Mammary epithelial cell (primary cell): ENCODE measurements at regions of chr1 and their contacts with region 1.

Region 1: DNA sequence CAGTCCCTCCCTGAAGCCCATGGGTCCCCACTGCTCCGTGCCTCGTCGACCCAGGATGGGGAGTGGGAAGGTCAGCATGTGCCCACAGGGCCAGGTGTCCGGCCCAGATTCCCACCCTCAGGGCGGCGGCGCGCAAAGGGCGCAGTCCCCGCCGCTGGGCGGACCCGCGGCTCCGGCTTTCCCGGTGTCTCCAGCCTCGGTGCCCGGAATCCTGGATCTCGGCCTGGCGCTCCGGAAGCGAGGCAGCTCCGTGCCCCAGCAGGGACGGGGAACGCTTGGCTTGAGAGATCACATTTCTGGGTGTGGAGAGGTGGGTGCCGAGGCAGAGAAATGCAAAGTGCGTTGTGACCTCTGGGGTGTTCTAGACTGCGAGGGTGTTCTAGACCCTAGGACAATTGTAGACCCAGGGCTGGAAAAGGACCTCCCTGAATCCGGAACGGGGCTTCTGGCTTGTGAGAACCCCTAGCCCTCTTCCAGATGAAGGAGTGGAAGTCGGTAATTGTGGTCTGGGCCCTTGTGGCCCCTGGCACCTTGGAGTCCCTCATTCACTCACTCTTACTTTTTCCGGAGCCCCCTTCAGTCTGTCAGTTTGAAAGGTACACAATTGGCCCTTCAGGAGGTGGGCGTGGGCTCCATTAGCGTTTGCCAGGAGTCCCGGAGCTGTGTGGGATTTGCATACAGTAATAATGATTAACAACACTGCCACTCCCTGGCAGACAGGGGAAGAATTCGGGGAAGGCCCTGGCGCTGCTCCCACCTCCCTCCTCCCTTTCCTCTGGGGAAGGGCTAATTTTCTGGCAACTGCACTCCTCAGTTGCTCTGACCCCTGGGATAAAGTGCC is 1.6 kb upstream of the KCND3 start:
- DNase-seq: peak; percentile 57
- H3K4me3 ChIP-seq: peak overlapping the region; percentile 32 to 52 (median 48)
- H3K27ac ChIP-seq: no peak overlapping the region
- H3K4me1 ChIP-seq: peaks cover 18% of the 10 kb centered on the region
- H3K27me3 ChIP-seq: peaks cover 5% of the 10 kb centered on the region
- CTCF ChIP-seq: peak; percentile 43 to 60

Region 2: DNA sequence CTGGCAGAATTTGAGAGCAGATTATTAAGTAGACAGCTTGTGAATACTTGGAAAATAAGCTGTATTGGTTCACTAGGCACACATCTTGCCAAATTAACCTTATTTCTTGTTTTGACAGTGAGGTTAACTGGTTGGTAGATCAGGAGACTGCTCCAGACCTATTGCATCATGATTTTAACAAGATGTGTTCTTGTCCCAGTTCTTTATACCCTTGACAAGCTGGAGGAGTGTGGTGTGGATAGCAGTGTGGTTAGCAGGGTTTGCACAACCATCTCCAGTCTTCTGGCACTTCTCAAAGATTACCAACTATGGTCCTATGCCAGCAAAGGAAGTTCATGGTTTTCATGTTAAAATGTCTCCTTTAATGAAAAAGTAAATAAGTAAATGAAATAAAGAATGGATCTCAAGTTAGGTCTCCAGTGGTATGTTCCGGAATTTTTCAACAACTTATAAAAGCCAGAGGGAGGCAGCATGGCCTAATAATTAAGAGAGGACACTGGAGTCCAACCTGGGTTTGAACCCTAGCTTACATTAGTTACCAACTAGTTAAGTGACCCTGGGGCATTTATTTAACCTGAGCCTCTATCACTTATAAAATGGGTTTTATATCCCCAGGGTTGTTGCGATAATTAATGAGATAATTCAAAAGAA is 201.3 kb before region 1 on chr1:
- CTCF ChIA-PET with region 1: no interaction called
- dilution Hi-C with region 1: no loop called
- in situ Hi-C with region 1: no loop called
- intact Hi-C with region 1: loop called (anchors 1 kb)
- DNase-seq: no peak
- H3K4me3 ChIP-seq: no peak overlapping the region
- H3K27ac ChIP-seq: no peak overlapping the region
- H3K4me1 ChIP-seq: no peaks in the 10 kb centered on the region
- H3K27me3 ChIP-seq: no peaks in the 10 kb centered on the region
- CTCF ChIP-seq: peak in 1 of 2 donors; percentile 29

Region 3: GRCh38 chr1:111801071-111801841 is 189.8 kb before region 1 on chr1:
- CTCF ChIA-PET with region 1: no interaction called
- dilution Hi-C with region 1: no loop called
- in situ Hi-C with region 1: no loop called
- intact Hi-C with region 1: loop called (anchors 1 kb)
- DNase-seq: no peak
- H3K4me3 ChIP-seq: no peak overlapping the region
- H3K27ac ChIP-seq: no peak overlapping the region
- H3K4me1 ChIP-seq: no peaks in the 10 kb centered on the region
- H3K27me3 ChIP-seq: no peaks in the 10 kb centered on the region
- CTCF ChIP-seq: peak in 1 of 2 donors; percentile 16

Region 4: GRCh38 chr1:111880881-111881837 is 109.9 kb before region 1 on chr1:
- CTCF ChIA-PET with region 1: no interaction called
- dilution Hi-C with region 1: no loop called
- in situ Hi-C with region 1: no loop called
- intact Hi-C with region 1: loop called (anchors 10 kb)
- DNase-seq: no peak
- H3K4me3 ChIP-seq: no peak overlapping the region
- H3K27ac ChIP-seq: no peak overlapping the region
- H3K4me1 ChIP-seq: no peaks in the 10 kb centered on the region
- H3K27me3 ChIP-seq: no peaks in the 10 kb centered on the region
- CTCF ChIP-seq: no peak

Region 5: GRCh38 chr1:111937101-111937725 is 53.9 kb before region 1 on chr1:
- CTCF ChIA-PET with region 1: no interaction called
- dilution Hi-C with region 1: no loop called
- in situ Hi-C with region 1: no loop called
- intact Hi-C with region 1: no loop called
- DNase-seq: no peak
- H3K4me3 ChIP-seq: no peak overlapping the region
- H3K27ac ChIP-seq: no peak overlapping the region
- H3K4me1 ChIP-seq: peaks cover 19% of the 10 kb centered on the region
- H3K27me3 ChIP-seq: no peaks in the 10 kb centered on the region
- CTCF ChIP-seq: no peak